ENCODE measurements at regions of chr16 and their contacts with region 1.

Region 1: DNA sequence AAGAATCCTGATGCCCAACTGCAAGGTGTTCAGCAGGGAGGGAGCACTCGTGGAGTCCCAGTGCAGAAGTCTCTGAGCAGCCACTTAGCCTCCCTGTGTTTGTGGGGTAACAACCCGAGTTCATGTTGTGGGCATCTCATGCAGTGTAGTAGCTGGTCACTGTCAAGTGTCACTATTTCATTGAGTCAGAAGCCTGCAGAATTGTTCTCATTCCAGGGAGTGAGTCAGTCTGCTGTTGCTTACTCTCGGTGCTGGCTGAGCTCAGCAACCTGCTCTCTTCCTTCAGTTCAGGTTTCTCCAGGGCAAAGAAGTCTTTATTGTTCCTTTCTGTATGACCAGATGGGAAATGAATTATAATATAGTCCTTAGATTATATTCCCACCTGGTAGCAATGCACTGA is 24.1 kb downstream of the HMOX2 start:
- DNase-seq: peak; percentile 49
- H3K4me3 Mint-ChIP-seq: no peak overlapping the region
- H3K27ac Mint-ChIP-seq: peak overlapping the region; percentile 7
- H3K4me1 Mint-ChIP-seq: peaks cover 85% of the 10 kb centered on the region
- H3K27me3 Mint-ChIP-seq: no peaks in the 10 kb centered on the region

Region 2: GRCh38 chr16:4489030-4489429 is 11.2 kb before region 1 on chr16:
- CTCF ChIA-PET with region 1: interaction called, 15 read pairs
- intact Hi-C with region 1: no loop called
- DNase-seq: no peak
- H3K4me3 Mint-ChIP-seq: no peak overlapping the region
- H3K27ac Mint-ChIP-seq: peak overlapping the region; percentile 89
- H3K4me1 Mint-ChIP-seq: peaks cover 64% of the 10 kb centered on the region
- H3K27me3 Mint-ChIP-seq: no peaks in the 10 kb centered on the region

Region 3: DNA sequence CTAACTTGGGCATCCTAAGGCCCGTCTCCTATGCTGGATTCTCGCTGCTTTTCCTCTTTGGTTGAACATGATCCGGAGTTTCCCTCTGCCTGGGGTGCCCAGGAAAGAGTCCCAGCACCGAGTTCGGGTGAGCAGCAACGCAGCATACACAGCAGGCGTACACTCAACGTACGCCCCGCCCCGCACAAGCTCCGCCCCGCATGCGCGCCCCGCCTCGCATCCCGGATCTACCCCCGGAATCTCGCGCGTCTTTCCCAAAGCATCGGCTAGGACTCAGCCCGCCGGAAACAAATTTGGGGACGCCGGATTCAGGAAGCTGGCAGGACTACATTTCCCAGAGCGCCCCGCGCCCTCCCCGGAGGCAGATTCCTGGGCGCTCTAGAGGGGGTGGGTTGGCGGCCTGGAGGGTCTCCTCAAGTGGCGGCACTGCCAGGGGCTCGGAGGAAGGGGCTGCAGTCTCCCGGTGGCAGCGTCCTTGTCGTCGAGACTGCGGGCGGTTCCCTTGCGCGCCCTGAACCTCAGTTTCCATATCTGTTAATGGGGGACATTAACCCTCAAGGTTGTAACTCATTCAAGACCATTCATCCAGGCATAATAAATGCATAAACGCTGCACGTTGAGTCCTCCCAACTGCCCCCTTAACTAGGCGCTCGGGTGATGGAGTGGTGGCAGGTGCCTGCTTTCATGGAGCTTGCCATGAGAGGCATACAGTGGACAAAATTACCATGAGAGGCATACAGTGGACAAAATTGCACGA is 268.5 kb after region 1 on chr16:
- CTCF ChIA-PET with region 1: no interaction called
- intact Hi-C with region 1: no loop called
- DNase-seq: peak; percentile 92
- H3K4me3 Mint-ChIP-seq: peak overlapping the region; percentile 93
- H3K27ac Mint-ChIP-seq: peak overlapping the region; percentile 93
- H3K4me1 Mint-ChIP-seq: peaks cover 35% of the 10 kb centered on the region
- H3K27me3 Mint-ChIP-seq: no peaks in the 10 kb centered on the region